Posterior vena cava (tissue), 2 donors: ENCODE measurements at regions of chr18 and their contacts with region 1.

Region 1: DNA sequence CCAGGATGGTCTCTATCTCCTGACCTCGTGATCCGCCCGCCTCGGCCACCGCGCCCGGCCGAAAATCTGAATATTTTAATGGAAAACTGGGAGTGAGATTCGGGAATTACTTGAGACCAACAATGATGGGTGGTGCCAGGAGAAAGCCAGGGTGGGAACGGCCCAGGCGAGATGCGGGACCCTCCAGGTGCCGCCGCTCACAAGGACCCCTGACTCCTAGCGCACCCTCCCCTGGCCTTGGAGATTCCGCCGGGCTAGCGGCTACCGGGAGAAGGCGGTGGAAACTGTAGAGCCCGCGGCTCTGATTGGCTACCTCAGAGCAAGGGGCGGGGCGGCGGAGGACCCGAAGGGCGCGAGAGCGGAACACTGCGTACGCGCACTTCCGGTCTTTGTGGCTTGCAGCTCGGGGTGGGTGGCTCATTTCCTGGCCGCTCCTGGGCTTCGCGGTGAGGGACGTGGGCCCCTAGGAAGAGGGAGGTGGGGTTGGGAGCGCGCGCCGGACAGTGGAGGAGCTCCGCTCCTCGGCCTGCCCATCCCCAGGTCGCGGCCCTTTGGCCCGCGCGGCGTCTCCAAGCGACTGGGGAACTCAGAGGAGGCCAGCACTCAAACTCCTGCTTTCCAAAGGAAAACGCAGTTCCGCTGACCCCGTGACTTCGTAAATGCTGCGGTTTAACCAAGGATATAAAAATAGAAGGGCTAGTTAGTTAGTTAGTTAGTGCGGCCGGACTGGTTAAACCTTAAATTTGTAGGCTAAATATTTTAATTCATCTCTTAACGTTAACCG is at the start of gene ZNF397:
- DNase-seq: peak; percentile 100
- total RNA-seq, gene ZNF397: 25.5 to 26.3 TPM

Region 2: GRCh38 chr18:35253655-35254287 is 12.9 kb after region 1 on chr18:
- intact Hi-C with region 1: no loop called
- DNase-seq: no peak

Region 3: DNA sequence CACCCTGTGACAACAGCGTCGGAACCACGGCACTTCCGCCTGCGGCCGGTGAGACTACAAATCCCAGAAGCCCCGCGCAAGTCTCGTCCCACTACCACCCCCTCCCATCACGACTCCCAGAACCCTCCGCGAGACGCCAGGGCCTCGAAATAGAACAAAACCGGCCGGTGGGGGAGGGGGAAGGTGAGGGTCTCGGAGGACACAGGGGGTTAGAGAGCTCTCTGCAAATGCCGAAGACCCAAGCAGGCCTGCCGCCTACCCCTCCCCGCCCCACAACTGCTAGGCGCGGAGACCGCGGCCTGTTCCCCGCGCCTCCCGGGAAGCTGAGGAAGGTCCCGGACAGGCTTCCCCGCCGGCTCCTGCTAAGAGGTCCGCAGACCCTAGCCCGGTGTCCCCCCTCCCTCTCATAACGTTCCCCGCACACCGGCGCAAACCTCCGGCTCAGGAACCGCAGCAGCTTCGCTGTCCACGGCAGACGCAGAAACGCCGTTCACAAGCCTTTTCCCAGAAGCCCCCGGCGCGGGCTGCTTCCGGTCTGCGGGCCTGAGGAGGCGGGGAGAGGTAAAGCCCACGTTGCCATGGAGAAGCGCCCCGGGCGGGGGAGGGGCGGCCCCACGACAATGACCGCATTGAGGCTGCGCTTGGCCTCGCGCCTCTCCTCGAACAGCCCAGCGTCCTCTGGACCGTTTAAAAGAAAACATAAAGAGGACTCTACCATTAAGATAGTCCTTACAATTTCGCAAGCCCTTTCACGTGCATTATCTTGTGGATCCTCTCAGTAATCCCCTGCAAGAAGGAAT is 103.3 kb after region 1 on chr18 and contains the start of gene ZNF24:
- intact Hi-C with region 1: loop called in 1 of 2 experiments (anchors 10 kb)
- DNase-seq: peak; percentile 99
- total RNA-seq, gene ZNF24: 36.3 to 43.8 TPM